ENCODE measurements at regions of chr4 and their contacts with region 1.

Region 1: DNA sequence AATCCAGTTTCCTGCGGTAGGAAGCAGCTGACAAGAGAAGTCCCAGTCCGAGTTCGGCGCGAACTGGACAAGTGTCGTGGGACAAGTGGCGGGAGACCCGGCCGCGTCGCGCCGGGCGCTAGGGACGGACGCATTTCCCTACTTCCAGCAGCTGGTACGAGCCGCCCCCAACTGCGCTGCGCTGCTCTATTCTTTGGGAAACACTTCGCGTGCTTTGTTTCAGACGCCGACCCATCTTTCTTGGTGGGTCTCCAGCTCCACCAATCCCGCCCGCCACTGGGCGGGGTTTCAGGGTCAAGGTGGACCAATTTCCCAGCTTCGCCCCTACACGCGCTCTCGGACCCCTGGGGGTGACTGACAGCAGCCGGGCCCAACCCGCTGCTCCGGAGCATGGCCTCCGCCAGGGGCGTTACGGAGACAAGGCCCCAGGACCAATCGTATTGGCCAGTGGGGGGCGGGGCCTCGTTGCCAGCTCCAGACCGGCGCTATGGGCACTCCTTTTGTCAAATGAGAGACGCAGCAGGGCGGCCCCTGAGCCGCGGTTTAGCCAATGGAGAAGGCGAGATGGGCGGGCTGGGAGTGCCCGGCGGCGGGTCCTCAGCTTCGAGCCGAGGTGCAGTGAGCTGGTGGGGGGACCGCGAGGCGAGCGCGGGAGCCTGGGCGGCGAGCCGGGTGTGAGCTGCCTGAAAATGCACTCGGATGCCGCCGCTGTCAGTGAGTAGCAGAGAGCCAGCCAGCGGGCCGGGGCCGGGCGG is at the start of gene DCUN1D4:
- DNase-seq: peak; percentile 100
- H3K4me3 ChIP-seq: peak within 1 kb of the TSS; percentile 79
- H3K27ac ChIP-seq: peak within 1 kb of the TSS; percentile 95
- H3K4me1 ChIP-seq: peaks cover 37% of the 10 kb centered on the region
- H3K27me3 ChIP-seq: no peaks in the 10 kb centered on the region
- CTCF ChIP-seq: peak; percentile 61
- total RNA-seq, gene DCUN1D4: 45.0 TPM

Region 2: DNA sequence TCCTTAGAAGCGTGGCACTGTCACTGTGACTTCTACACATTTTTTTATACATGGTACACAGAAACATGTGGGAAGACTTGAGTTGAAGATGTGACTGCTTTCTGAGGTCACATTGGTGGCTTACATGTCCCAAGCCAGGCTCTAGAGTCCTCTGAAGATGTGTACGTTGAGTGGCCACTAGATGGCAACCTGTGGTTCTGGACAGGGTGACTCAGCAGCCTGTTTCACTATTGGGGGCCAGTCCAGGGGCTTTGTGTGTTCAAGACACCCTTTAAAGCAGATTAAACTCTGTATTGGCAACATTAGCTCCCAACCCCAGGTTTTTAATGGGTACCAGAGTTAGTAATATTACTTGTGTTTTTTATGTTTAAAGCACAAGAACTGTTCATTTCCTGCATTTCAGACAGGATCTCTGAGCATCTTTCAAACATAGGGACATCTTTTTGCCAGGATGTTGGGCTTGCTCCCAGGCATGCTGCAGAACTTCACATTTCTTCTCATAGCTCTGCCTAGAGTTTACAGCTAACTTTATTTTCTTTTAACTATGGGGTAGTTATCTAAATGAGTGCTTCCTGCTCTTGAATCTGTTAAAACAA is 53.2 kb after region 1 on chr4:
- intact Hi-C with region 1: loop called (anchors 10 kb)
- DNase-seq: peak; percentile 29
- H3K4me3 ChIP-seq: no peak overlapping the region
- H3K27ac ChIP-seq: peak overlapping the region; percentile 39
- H3K4me1 ChIP-seq: peaks cover 39% of the 10 kb centered on the region
- H3K27me3 ChIP-seq: no peaks in the 10 kb centered on the region
- CTCF ChIP-seq: peak; percentile 86

Region 3: DNA sequence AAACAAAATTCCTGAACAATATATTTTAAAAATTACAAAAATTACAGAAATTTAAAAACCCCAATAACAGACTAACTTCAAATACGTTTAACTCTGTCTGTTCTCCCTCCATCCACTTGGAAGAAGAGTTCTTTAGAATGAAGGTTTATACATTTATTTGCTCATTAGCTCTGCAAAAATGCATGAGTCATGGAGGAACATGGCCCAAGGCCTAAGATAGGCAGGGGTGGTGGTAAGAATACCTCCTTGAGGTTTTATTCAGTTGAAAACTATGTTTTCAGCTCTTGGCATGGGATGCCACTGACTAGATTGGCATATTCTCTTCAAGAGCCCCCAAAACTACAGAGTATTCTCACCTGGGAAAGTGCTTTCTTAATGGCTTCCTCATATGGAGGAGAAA is 186.2 kb after region 1 on chr4:
- intact Hi-C with region 1: loop called (anchors 5 kb)
- DNase-seq: no peak
- H3K4me3 ChIP-seq: no peak overlapping the region
- H3K27ac ChIP-seq: no peak overlapping the region
- H3K4me1 ChIP-seq: peaks cover 7% of the 10 kb centered on the region
- H3K27me3 ChIP-seq: no peaks in the 10 kb centered on the region
- CTCF ChIP-seq: no peak